Posterior vena cava (tissue), 2 donors: ENCODE measurements at regions of chr9 and their contacts with region 1.

Region 1: DNA sequence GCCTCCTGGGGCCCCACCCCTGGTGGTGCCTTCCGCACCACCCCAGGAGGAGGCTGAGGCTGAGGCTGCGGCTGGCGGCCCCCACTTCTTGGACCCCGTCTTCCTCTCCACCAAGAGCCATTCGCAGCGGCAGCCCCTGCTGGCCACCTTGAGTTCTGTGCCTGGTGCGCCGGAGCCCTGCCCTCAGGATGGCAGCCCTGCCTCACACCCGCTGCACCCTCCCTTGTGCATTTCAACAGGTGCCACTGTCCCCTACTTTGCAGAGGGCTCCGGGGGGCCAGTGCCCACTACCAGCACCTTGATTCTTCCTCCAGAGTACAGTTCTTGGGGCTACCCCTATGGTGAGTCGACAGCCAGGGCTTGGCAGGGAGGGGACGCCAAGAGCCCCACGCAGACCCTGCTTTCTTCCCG is 4.1 kb upstream of the EHMT1 start:
- DNase-seq: peak; percentile 74

Region 2: GRCh38 chr9:137632230-137633161 is 17.8 kb after region 1 on chr9:
- intact Hi-C with region 1: loop called in 1 of 2 experiments (anchors 1 kb)
- DNase-seq: peak; percentile 55